Activated CD4-positive, alpha-beta T cell treated with anti-CD3 and anti-CD28 coated beads for 36 hours (primary cell): ENCODE measurements at regions of chr7 and their contacts with region 1.

Region 1: GRCh38 chr7:32942786-32943653 is 14.2 kb upstream of the FKBP9 start:
- DNase-seq: peak; percentile 85
- ATAC-seq: peak; percentile 93
- H3K4me3 Mint-ChIP-seq: peak overlapping the region; percentile 87
- H3K27ac Mint-ChIP-seq: no peak overlapping the region
- H3K4me1 Mint-ChIP-seq: peaks cover 10% of the 10 kb centered on the region
- H3K27me3 Mint-ChIP-seq: peaks cover 9% of the 10 kb centered on the region

Region 2: GRCh38 chr7:31811650-31812461 is 1131.2 kb before region 1 on chr7:
- CTCF ChIA-PET with region 1: no interaction called
- POLR2A ChIA-PET with region 1: no interaction called
- intact Hi-C with region 1: no loop called
- DNase-seq: no peak
- ATAC-seq: no peak
- H3K4me3 Mint-ChIP-seq: no peak overlapping the region
- H3K27ac Mint-ChIP-seq: no peak overlapping the region
- H3K4me1 Mint-ChIP-seq: no peaks in the 10 kb centered on the region
- H3K27me3 Mint-ChIP-seq: no peaks in the 10 kb centered on the region

Region 3: GRCh38 chr7:32694182-32694581 is 248.8 kb before region 1 on chr7:
- CTCF ChIA-PET with region 1: no interaction called
- POLR2A ChIA-PET with region 1: no interaction called
- intact Hi-C with region 1: loop called in 1 of 2 experiments (anchors 5 kb)
- DNase-seq: no peak
- ATAC-seq: no peak
- H3K4me3 Mint-ChIP-seq: no peak overlapping the region
- H3K27ac Mint-ChIP-seq: no peak overlapping the region
- H3K4me1 Mint-ChIP-seq: peaks cover 6% of the 10 kb centered on the region
- H3K27me3 Mint-ChIP-seq: peaks cover 3% of the 10 kb centered on the region

Region 4: DNA sequence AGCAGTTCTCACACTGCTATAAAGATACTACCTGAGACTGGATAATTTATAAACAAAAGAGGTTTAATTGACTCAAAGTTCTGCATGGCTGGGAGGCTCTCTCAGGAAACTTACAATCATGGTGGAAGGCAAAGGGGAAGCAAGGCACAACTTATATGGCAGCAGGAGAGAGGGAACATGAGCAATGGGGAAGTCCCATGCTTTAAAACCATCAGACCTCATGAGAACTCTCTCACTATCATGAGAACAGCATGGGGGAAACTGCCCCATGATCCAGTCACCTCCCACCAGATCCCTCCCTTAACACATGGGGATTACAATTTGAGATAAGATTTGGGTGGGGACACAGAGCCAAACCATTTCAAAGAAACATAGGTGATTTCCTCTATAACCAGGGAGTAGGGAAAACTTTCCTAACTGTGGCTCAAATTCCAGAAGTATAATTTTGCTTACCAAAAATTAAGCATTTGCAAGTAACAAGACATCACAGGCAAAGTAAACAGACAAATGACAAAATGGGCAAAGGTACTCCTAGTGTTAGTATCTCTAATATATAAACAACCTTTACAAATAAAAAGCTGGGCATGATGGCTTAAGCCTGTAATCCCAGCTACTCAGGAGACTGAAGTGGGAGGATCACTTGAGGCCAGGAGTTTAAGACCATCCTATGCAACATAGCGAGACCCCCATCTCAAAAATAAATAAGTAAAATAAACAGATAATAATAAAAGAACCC is 139.4 kb before region 1 on chr7:
- CTCF ChIA-PET with region 1: interaction called, 3 read pairs
- POLR2A ChIA-PET with region 1: no interaction called
- intact Hi-C with region 1: loop called in 1 of 2 experiments (anchors 1 kb)
- DNase-seq: no peak
- ATAC-seq: no peak
- H3K4me3 Mint-ChIP-seq: no peak overlapping the region
- H3K27ac Mint-ChIP-seq: no peak overlapping the region
- H3K4me1 Mint-ChIP-seq: no peaks in the 10 kb centered on the region
- H3K27me3 Mint-ChIP-seq: no peaks in the 10 kb centered on the region

Region 5: DNA sequence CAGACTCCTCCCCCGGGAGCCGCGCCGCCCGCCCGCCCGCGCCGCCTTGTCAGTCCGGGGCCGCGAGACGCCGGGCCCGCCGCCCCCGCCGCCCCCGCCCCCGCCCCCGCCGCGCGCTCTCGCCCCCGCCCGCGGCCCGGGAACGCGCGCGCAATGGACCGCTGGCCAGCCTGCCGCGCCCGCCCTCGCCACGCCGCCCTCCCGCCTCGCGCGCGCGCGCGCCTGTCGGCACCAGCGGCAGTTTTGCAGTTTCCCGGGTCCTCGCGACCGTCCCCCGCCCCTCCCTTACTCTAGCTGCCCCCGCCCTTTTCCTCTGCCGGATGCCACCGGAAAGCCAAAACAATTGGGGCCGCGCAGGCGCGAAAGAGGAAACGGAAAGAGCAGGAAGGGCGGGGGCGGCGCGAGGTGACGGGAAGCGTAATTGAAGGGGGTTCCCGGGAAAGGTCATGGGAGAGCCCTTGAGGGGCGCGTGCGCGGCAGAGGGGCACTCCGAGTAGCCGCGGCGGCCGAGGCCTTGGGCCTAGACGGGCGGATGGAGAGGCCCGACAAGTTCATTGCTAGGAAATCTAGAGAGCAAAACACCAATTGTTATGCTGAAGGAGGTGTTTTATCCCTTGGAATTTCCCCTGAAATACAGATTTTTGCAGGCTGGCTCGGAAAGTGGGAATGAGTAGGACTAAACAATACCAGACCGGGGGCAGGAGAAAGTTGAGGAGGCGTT is 51.1 kb before region 1 on chr7:
- CTCF ChIA-PET with region 1: interaction called, 14 read pairs
- POLR2A ChIA-PET with region 1: interaction called, 8 read pairs
- intact Hi-C with region 1: loop called (anchors 1 kb)
- DNase-seq: peak; percentile 99
- ATAC-seq: peak; percentile 67
- H3K4me3 Mint-ChIP-seq: peak overlapping the region; percentile 94
- H3K27ac Mint-ChIP-seq: peak overlapping the region; percentile 99
- H3K4me1 Mint-ChIP-seq: peaks cover 44% of the 10 kb centered on the region
- H3K27me3 Mint-ChIP-seq: no peaks in the 10 kb centered on the region

Region 6: DNA sequence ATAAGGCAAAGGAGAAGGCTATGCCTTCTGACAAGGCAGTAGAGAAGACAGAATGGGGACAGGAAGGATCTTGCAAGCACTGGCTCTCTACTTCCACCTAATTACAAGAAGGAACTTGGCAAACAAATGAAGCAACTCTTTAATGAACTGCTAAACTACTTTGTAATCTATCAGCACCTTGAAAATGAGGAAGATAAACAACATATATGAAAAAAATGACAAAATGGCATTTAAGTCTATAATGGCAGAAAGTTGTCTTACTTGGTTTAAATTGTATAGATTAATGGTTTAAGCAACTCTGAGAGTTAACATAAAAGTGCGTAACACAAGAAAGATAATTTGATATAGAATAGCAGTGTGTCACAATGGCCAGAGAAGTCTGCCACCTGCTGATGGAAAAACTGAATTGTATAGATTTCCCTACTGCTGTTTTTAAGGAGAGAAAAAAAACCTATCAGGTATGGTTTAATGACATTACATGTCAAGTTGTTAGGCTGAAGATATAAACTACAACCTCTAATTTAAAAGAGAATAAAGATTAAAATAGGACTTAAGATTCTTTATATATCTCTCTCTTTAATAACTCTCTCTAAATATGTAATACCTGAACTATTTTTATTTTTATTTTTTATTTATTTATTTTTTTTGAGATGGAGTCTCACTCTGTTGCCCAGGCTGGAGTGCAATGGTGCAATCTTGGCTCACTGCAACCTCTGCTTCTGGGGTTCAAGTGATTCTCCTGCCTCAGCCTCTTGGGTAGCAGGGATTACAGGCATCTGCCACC is 107.7 kb after region 1 on chr7:
- CTCF ChIA-PET with region 1: interaction called, 3 read pairs
- POLR2A ChIA-PET with region 1: no interaction called
- intact Hi-C with region 1: loop called in 1 of 2 experiments (anchors 5 kb)
- DNase-seq: peak; percentile 30
- ATAC-seq: peak; percentile 60
- H3K4me3 Mint-ChIP-seq: no peak overlapping the region
- H3K27ac Mint-ChIP-seq: no peak overlapping the region
- H3K4me1 Mint-ChIP-seq: peaks cover 49% of the 10 kb centered on the region
- H3K27me3 Mint-ChIP-seq: no peaks in the 10 kb centered on the region

Region 7: DNA sequence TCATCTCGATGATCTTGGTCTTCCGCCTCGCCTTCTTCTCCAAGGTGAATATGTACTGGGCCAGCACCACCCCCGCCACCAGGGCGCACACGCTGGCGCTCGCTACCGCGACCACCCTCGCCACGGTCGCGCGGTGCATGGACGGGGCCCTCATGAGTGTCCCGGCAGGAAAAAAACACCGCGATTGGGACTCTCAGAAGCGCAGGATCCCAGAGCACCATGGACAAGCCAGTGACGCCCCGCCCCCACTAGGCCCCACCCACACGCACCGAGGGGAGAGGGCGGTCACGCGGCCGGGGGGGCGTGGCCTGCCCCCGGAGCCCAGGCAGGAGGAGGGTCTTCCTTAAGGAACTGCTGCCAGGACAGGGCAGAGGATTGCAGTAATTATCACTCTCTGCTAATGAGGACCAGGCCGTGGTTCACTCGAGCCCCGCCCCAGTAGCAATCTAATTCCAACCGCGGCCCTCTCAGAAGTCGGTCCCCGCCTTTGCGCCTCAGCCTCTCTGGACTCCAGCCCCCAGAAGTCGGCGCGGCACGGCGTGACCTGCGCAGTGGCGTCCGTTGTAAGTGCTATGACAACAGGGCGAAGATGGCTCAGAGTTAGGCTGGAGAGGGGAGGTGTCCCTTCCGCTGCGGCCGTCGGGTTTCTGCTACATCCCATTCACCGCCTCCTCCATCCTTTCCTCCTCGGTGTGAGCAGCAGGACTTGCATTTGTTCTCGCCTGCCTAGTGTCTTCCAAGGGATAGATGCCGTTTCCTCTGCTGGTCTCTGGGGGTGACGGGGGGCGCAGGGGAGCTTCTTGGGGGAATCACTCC is 186.2 kb after region 1 on chr7 and contains the start of gene BBS9:
- CTCF ChIA-PET with region 1: no interaction called
- POLR2A ChIA-PET with region 1: no interaction called
- intact Hi-C with region 1: loop called in 1 of 2 experiments (anchors 1 kb)
- DNase-seq: peak; percentile 96
- ATAC-seq: peak; percentile 99
- H3K4me3 Mint-ChIP-seq: peak within 1 kb of the TSS; percentile 95
- H3K27ac Mint-ChIP-seq: peak within 1 kb of the TSS; percentile 89
- H3K4me1 Mint-ChIP-seq: peaks cover 16% of the 10 kb centered on the region
- H3K27me3 Mint-ChIP-seq: no peaks in the 10 kb centered on the region
- total RNA-seq, gene BBS9: 4.1 to 9.9 TPM

Region 8: DNA sequence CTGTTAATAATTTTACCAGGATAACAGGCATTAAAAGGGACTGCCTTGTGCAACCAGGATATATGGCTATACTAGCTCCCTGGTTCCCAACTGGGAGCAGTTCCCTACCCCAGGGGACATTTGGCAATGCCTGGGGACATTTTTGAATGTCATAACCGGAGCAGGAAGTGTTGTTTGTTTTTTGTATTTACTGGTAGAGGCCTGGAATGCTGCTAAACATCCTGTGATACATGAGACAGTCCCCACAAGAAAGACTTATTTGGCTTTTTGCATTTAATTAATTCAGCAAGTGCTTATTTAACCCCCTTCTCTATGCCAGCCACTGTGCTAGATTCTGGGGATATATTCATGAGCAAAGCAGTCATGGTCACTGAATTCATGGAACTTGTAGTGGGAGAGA is 367.5 kb after region 1 on chr7:
- CTCF ChIA-PET with region 1: no interaction called
- POLR2A ChIA-PET with region 1: no interaction called
- intact Hi-C with region 1: no loop called
- DNase-seq: no peak
- ATAC-seq: no peak
- H3K4me3 Mint-ChIP-seq: no peak overlapping the region
- H3K27ac Mint-ChIP-seq: no peak overlapping the region
- H3K4me1 Mint-ChIP-seq: no peaks in the 10 kb centered on the region
- H3K27me3 Mint-ChIP-seq: no peaks in the 10 kb centered on the region